ENCODE measurements at regions of chr1 and their contacts with region 1.

Region 1: DNA sequence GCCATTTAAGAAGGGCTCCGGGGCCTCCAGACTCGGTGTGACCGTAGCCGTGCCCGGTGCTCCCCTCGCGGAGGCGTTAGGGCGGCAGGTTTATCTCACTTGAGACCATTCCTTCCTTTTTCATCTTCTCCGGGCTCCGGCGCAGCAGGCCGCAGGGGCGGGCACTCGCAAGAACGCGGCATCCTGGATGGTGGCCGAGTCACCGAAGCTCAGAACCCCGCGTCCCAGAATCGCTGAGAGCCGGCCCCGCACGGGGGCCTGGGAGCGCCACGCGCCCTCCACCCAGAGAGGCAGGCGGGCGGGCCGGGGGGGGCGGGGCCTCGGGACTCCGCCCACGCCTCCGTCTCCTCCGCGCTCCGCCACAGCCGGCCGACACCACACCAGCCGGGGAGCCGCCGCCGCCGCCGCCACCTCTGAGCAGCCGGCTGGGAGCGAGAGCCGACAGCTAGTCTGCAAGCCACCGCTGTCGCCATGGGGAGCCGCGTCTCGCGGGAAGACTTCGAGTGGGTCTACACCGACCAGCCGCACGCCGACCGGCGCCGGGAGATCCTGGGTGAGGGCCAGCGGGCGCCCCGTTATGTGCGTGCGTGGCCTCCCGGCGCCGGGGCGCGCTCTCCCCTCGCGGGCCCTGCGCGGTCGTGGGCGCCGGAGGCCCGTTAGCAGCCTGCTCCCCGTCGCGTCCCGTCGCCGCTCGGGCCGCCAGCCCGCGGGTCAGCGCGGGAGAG is at the start of gene DEGS1:
- DNase-seq: peak; percentile 82
- ATAC-seq: peak; percentile 95 to 97
- total RNA-seq, gene DEGS1: 59.2 to 64.9 TPM

Region 2: DNA sequence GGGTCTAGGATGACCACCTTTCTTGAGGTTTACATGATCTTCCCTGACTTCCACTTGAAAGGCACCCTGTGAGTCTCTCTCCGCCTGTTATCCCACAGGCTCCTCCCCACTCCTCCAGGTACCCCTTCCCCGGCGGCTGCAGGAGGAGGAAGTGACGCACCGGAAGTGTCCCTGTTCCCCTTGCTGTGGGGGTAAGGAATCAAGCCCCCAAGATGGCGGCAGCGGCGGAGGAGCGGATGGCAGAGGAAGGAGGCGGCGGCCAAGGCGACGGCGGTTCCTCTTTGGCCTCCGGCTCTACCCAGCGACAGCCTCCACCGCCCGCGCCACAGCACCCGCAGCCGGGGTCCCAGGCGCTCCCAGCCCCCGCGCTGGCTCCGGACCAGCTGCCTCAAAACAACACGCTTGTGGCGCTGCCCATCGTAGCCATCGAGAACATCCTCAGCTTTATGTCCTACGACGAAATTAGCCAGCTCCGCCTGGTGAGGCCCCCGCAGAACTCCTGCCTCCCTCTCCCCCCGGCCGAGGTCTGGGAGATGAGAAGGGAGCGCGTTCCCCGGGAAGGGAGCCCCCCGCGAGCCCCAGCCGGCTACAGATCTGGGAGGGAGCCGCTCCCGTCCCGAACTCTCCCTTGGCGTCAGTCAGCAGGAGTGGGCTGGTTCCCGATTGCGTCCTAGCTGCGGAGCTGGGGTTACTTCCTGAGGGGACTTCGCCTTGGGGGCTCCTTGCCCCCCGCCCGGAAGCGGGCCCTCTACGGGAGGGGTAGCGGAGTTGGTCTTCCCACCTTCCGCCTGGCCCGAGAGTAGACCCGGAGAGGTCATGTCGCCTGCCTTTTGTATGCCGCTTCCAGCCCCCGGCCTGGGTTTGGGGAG is 68.9 kb before region 1 on chr1 and contains the start of gene FBXO28:
- intact Hi-C with region 1: no loop called
- DNase-seq: peak; percentile 96
- ATAC-seq: peak; percentile 100
- total RNA-seq, gene FBXO28: 17.3 to 20.1 TPM

Region 3: DNA sequence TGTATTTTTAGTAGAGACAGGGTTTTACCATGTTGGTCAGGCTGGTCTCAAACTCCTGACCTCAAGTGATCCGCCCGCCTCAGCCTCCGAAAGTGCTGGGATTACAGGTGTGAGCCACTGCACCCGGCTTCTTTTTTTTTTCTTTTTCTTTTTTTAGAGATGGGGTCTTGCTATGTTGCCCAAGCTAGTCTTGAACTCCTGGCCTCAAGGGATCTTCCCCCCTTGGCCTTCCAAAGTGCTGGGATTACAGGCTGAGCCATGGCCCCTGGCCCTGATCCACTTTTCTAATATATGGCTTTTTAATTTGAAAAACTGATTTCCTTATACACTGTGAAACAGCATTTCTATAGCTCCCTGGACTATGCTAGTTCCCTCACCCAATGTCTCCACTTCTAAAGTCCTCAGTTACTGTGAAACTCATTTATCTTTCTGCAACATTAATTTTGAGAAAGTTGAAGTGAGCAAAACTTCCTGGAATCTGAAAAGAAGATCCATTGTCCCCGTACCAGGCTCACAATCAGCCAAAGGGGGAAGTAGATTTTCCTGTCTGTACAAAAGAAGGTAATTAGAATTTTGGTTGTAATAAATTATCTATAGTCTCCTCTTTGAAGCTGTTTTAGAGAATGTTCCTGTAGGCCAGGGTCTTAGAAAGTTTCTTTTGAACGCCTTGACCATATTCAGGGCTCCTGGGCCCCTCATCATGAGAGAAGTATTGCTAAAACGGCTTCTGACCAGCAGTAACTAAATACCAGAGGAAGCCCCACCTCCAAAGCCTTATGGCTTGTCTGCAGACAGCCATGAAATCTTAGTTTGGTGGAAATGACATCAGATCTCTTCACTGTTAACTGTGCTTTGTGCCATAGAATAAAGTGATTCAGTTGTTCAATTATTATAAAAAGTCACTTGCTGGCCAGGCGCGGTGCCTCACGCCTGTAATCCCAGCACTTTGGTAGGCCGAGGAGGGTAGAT is 34.9 kb after region 1 on chr1:
- intact Hi-C with region 1: loop called in 1 of 2 experiments (anchors 5 kb)
- DNase-seq: no peak
- ATAC-seq: no peak

Region 4: DNA sequence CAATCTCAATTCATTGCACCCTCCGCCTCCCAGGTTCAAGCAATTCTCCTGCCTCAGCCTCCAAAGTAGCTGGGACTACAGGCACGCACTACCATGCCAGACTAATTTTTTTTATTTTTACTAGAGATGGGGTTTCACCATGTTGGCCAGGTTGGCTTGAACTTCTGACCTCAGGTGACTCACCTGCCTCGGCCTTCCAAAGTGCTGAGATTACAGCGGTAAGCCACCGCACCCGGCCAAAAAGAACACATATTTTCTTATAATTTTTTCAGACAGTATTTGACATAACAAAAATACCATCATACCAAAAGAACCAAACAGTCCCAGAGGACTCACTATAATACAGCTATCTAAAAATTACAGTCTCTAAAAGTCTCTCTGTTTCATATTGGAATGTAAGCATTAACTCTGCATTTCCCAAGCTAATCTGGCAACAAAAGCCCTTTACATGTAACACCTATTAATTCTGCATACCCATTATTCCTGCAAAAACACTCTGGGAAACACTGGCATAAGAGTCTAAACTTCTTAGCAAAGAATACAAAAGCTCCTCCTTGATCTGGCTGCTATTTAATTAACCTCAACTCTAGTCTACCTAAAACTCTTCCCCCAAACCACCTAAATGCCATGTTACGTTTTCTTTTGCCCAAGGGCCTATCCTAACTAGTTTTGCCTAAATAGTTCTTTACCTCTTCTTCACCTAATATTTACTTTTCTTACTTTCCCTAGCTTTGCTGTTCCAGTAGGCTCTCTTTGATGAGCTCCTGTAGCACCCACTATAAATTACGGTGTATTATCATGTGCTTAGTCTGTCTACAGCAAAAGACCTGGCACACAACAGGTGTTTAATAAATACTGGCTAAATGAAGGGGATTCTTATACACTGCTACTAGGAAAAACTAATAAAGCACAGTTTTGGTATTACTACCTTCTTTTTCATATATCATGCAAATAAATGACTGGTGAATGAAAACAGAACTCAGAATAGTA is 224.8 kb after region 1 on chr1:
- intact Hi-C with region 1: no loop called
- DNase-seq: no peak
- ATAC-seq: peak in 1 of 2 donors; percentile 38